Kidney (tissue), 22 donors: ENCODE measurements at regions of chr17 and their contacts with region 1.

Region 1: GRCh38 chr17:45385331-45385997 is 47.2 kb downstream of the ARHGAP27 start:
- DNase-seq: peak; percentile 86 to 94 (median 88)
- H3K4me3 ChIP-seq: no peak overlapping the region
- H3K27ac ChIP-seq: no peak overlapping the region
- H3K4me1 ChIP-seq: peaks cover 0 to 3% (median 0%) of the 10 kb centered on the region in 3 donors
- H3K27me3 ChIP-seq: no peaks in the 10 kb centered on the region
- CTCF ChIP-seq: peak; percentile 98

Region 2: GRCh38 chr17:45228763-45229539 is 156.5 kb before region 1 on chr17:
- intact Hi-C with region 1: loop called (anchors 10 kb)
- DNase-seq: peak in 3 of 5 donors; percentile 43 to 91 (median 56)
- H3K4me3 ChIP-seq: no peak overlapping the region
- H3K27ac ChIP-seq: peak overlapping the region in 1 of 2 donors; percentile 47
- H3K4me1 ChIP-seq: peaks cover 0 to 2% (median 0%) of the 10 kb centered on the region in 3 donors
- H3K27me3 ChIP-seq: no peaks in the 10 kb centered on the region
- CTCF ChIP-seq: no peak

Region 3: DNA sequence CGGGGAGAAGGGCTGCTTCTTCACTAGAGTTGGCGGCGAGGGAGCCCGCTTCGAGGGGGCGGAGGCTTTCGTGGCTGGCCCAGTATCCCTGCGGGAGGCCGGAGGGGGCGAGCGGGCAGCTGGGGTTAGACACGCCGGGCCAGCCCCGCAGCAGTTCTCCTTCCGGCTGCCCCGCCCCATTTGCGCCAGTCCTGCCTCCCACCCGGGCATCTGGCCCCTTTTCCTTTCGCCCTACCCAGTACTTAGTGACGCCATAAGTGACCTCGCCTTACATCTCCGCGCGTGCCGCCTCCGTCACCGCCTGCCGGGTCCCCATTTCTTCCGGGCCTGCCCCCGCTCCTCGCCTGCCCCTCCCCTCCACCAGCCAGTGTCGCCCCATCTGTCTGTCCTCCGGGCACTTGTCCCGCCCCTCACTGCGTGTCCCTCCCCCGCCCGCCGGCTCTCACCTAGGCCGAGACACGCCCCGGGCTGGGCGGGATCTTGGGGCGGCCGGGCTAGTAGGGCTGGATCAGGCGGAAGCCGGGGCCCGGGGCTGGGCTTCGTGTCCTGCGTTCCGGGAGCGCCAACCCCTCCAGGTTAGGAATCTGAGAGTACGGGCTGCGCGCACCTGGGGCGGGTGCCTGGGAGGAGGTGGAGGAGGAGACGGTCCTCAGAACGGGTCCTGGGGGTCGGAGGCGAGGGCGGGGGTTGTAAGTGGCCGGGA is 137.9 kb before region 1 on chr17:
- intact Hi-C with region 1: no loop called
- DNase-seq: peak; percentile 88 to 97 (median 94)
- H3K4me3 ChIP-seq: peak overlapping the region; percentile 20 to 59 (median 51)
- H3K27ac ChIP-seq: peak overlapping the region; percentile 51 to 53
- H3K4me1 ChIP-seq: peaks cover 0 to 8% (median 0%) of the 10 kb centered on the region in 3 donors
- H3K27me3 ChIP-seq: no peaks in the 10 kb centered on the region
- CTCF ChIP-seq: no peak

Region 4: DNA sequence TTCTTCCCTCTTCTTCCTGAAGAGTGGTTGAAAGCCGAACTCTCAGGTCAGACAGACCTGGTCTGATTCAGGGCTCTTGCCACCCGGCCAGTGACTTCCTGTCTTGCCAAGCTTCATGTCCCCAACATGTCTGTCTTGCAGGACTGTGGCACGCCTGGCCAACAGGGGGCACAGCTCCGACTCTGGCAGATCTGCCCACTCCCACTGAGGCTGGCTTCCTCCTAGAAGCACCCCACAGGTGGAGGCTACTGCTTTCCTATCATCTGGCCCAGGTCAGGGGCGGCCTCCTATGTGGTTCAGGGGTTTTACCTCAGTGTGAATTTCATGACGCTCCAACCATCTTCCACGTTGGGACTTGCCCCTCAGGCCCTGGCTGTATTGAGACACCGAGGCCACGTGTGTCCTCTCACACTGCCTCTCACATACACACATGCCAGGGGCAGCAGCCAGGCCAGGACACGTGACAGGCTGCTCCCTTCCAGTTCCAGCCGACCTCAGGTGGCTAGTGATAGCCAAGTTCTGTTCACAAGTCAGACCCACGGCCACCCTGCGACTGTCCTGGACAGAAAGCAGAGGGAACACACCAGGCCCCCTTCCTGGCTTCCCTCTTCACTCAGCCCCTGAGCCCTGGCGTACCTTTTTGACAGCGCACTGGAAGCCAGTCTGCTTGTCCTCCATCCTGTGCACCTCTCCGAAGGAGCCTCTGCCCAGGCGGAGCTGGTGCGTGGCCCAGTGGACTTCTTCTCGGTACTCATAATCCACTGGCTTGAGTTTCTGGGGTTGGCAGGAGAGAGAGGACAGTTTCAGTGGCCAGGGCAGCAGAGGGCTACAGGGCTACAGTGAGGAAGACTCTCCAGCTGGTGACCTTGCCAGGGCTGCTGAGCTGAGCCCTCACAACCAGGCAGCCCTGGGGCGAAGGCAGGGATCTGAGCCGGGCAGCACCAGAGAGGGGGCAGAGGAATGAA is 101.0 kb before region 1 on chr17:
- intact Hi-C with region 1: loop called (anchors 5 kb)
- DNase-seq: peak in 1 of 5 donors; percentile 54
- H3K4me3 ChIP-seq: no peak overlapping the region
- H3K27ac ChIP-seq: no peak overlapping the region
- H3K4me1 ChIP-seq: peaks cover 0 to 23% (median 12%) of the 10 kb centered on the region in 3 donors
- H3K27me3 ChIP-seq: no peaks in the 10 kb centered on the region
- CTCF ChIP-seq: no peak

Region 5: GRCh38 chr17:45307290-45308015 is 78.0 kb before region 1 on chr17:
- intact Hi-C with region 1: no loop called
- DNase-seq: no peak
- H3K4me3 ChIP-seq: no peak overlapping the region
- H3K27ac ChIP-seq: peak overlapping the region; percentile 32 to 66
- H3K4me1 ChIP-seq: peaks cover 0 to 37% (median 35%) of the 10 kb centered on the region in 3 donors
- H3K27me3 ChIP-seq: no peaks in the 10 kb centered on the region
- CTCF ChIP-seq: peak; percentile 2